Endothelial cell of umbilical vein (primary cell): ENCODE measurements at regions of chr16 and their contacts with region 1.

Region 1: DNA sequence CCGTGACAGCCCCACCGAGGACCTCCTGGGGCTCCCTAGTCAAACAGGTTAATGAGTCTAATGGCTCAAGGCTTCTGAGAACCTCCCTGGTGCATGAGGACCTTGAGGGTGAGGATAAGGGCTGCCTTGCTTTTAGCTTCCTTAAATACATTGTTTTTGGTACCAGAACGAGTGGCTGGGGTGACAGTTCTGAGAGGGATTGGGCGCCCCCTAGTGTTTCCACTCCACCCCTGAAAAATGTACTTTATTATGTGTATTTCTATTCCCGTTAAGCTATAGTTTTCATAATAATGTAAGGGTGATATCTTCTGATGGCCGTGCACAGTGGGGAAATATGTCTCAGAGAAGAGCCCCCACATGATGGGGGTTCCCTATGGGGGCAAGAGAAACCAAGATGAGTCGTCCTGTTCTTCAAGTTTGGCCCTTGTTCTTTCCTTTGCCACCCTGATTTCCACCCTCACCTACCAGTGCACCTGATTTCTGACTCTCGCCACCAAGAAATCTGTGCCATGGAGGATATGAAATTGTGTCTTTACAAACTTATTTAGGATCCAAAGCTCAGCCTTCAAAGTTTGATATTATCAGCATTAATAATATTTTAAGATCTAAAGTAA is 14.5 kb upstream of the VWA3A start:
- DNase-seq: peak; percentile 72
- H3K4me3 ChIP-seq: no peak overlapping the region
- H3K27ac ChIP-seq: no peak overlapping the region
- H3K4me1 ChIP-seq: peaks cover 28% of the 10 kb centered on the region
- H3K27me3 ChIP-seq: no peaks in the 10 kb centered on the region
- CTCF ChIP-seq: peak; percentile 76 to 77
- POLR2A ChIP-seq: no peak

Region 2: GRCh38 chr16:21982108-21982507 is 95.7 kb before region 1 on chr16:
- CTCF ChIA-PET with region 1: interaction called, 18 read pairs
- POLR2A ChIA-PET with region 1: no interaction called
- dilution Hi-C with region 1: no loop called
- intact Hi-C with region 1: no loop called
- DNase-seq: no peak
- H3K4me3 ChIP-seq: no peak overlapping the region
- H3K27ac ChIP-seq: no peak overlapping the region
- H3K4me1 ChIP-seq: no peaks in the 10 kb centered on the region
- H3K27me3 ChIP-seq: no peaks in the 10 kb centered on the region
- CTCF ChIP-seq: no peak
- POLR2A ChIP-seq: no peak

Region 3: DNA sequence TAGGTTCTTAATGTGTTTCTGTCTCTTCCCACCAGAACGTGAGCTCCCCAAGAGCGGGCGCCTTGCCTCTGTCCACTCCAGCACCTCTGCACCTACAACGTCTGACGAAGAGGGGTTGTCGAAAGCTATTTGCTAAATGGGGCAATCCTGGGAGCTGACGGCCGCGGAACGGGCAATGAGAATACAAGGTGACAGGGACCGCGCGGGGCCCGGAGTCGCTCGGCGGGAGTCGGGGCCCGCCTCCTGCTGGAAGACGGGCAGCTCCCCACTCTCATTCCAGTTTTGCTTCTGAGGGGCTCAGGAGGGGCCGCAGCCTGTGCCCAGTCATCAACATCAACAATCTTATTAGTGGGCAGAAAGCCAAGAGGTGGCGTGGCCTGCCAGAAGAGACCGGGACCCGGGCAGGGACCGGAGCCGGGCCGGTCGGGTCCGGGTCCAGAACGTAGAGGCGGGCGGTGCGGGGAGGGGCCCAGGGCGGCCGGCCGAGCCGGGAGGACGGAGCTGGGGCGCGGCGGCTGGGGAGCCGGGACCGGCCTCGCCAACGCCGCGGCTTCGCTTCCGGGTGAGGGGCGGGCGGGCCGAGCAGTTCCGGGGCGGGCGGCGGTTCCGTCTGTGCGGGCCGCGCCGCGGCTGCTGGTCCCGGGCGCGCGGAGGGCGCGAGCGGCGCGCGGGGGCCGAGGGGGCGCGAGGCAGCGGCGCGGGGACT is 70.1 kb before region 1 on chr16 and contains the start of gene MOSMO:
- CTCF ChIA-PET with region 1: interaction called, 994 read pairs
- POLR2A ChIA-PET with region 1: interaction called, 12 read pairs
- dilution Hi-C with region 1: no loop called
- intact Hi-C with region 1: no loop called
- DNase-seq: peak; percentile 72
- H3K4me3 ChIP-seq: peak within 1 kb of the TSS; percentile 63 to 86 (median 76)
- H3K27ac ChIP-seq: peak within 1 kb of the TSS; percentile 56
- H3K4me1 ChIP-seq: peaks cover 20% of the 10 kb centered on the region
- H3K27me3 ChIP-seq: no peaks in the 10 kb centered on the region
- CTCF ChIP-seq: peak in 1 of 2 donors; percentile 9
- POLR2A ChIP-seq: peak; percentile 58
- total RNA-seq, gene MOSMO: 22.0 and 23.2 TPM in 2 replicates

Region 4: GRCh38 chr16:22055878-22056277 is 21.9 kb before region 1 on chr16:
- CTCF ChIA-PET with region 1: interaction called, 44 read pairs
- POLR2A ChIA-PET with region 1: no interaction called
- dilution Hi-C with region 1: no loop called
- intact Hi-C with region 1: no loop called
- DNase-seq: no peak
- H3K4me3 ChIP-seq: no peak overlapping the region
- H3K27ac ChIP-seq: no peak overlapping the region
- H3K4me1 ChIP-seq: peaks cover 7% of the 10 kb centered on the region
- H3K27me3 ChIP-seq: no peaks in the 10 kb centered on the region
- CTCF ChIP-seq: peak in 1 of 2 donors; percentile 8
- POLR2A ChIP-seq: no peak

Region 5: GRCh38 chr16:22098405-22099255 is 20.8 kb after region 1 on chr16:
- CTCF ChIA-PET with region 1: interaction called, 96 read pairs
- POLR2A ChIA-PET with region 1: no interaction called
- dilution Hi-C with region 1: no loop called
- intact Hi-C with region 1: no loop called
- DNase-seq: peak; percentile 55
- H3K4me3 ChIP-seq: no peak overlapping the region
- H3K27ac ChIP-seq: no peak overlapping the region
- H3K4me1 ChIP-seq: no peaks in the 10 kb centered on the region
- H3K27me3 ChIP-seq: peaks cover 0 to 2% of the 10 kb centered on the region in 2 experiments
- CTCF ChIP-seq: peak; percentile 53 to 65
- POLR2A ChIP-seq: no peak

Region 6: GRCh38 chr16:22297114-22297878 is 219.5 kb after region 1 on chr16 and contains the start of gene POLR3E:
- CTCF ChIA-PET with region 1: interaction called, 3 read pairs
- POLR2A ChIA-PET with region 1: no interaction called
- dilution Hi-C with region 1: no loop called
- intact Hi-C with region 1: loop called (anchors 1 kb)
- DNase-seq: peak; percentile 99
- H3K4me3 ChIP-seq: peak within 1 kb of the TSS; percentile 77 to 99 (median 99)
- H3K27ac ChIP-seq: peak within 1 kb of the TSS; percentile 81
- H3K4me1 ChIP-seq: no peaks in the 10 kb centered on the region
- H3K27me3 ChIP-seq: no peaks in the 10 kb centered on the region
- CTCF ChIP-seq: peak; percentile 93
- POLR2A ChIP-seq: peak; percentile 66
- total RNA-seq, gene POLR3E: 42.8 and 48.3 TPM in 2 replicates